CD4-positive, alpha-beta T cell (primary cell): ENCODE measurements at regions of chr20 and their contacts with region 1.

Region 1: DNA sequence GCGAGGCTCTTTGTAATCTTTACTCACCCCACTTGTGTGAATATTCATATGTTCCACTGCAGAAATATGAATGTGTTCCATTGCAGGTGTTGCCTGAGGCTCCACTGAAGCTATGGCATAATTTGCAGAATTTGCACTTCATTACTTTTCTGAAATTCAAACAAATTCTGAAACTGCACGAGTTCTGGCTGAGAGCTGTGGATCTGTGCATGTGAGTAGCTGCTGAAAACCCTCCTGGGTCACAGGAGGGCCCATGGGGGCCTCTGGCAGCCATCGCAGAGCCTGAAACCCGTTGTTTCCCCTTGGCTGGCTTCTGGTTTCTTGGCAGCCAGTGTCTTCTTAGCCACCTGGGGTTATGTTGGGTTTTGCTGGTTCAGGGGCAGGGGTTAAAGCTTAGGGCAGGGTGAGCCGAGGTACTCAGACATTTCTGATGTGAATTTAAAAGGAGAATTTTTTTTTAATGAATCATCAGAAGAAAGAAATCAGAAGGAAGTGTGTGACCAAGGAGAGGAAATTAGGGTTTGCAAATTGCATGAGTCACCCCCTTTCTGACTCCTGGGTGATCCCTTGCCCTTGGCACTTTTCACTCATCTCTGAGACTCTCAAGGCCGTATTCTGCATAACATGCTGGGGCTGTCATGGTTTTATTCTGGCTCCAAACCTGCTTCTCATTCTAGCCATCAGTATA is 40.6 kb downstream of the TOX2 start:
- DNase-seq: peak in 12 of 14 experiments; percentile 19 to 75 (median 45)
- ATAC-seq: peak; percentile 62
- H3K4me3 ChIP-seq: no peak overlapping the region
- H3K4me3 Mint-ChIP-seq: peak overlapping the region; percentile 44
- H3K27ac ChIP-seq: no peak overlapping the region
- H3K27ac Mint-ChIP-seq: peak overlapping the region; percentile 29
- H3K4me1 ChIP-seq: peaks cover 85% of the 10 kb centered on the region
- H3K4me1 Mint-ChIP-seq: peaks cover 88% of the 10 kb centered on the region
- H3K27me3 ChIP-seq: no peaks in the 10 kb centered on the region
- H3K27me3 Mint-ChIP-seq: peaks cover 6% of the 10 kb centered on the region
- CTCF ChIP-seq: no peak

Region 2: DNA sequence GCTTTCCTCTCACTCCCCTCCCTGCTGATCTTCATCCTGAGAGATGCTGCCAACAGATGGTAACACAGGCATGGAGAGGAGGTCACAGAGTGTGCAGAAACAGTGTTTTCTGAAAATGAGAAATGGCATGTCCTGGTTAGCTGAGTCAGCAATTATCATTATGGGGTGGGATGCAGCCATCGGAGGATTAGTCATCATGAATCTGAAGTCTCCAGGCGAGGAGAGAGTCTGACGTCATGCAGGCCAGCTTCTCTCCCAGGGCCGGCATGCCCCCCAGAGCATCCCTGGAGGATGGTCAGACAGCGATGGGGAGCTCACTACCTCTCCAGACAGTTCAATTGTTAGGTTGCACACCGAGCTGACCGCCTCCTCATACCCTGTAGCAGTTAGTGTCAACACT is 223.7 kb before region 1 on chr20:
- CTCF ChIA-PET with region 1: no interaction called
- POLR2A ChIA-PET with region 1: no interaction called
- intact Hi-C with region 1: no loop called
- DNase-seq: no peak
- ATAC-seq: no peak
- H3K4me3 ChIP-seq: no peak overlapping the region
- H3K4me3 Mint-ChIP-seq: no peak overlapping the region
- H3K27ac ChIP-seq: no peak overlapping the region
- H3K27ac Mint-ChIP-seq: no peak overlapping the region
- H3K4me1 ChIP-seq: peaks cover 19% of the 10 kb centered on the region
- H3K4me1 Mint-ChIP-seq: peaks cover 53% of the 10 kb centered on the region
- H3K27me3 ChIP-seq: no peaks in the 10 kb centered on the region
- H3K27me3 Mint-ChIP-seq: no peaks in the 10 kb centered on the region
- CTCF ChIP-seq: no peak

Region 3: GRCh38 chr20:43840382-43841070 is 114.7 kb before region 1 on chr20:
- CTCF ChIA-PET with region 1: no interaction called
- POLR2A ChIA-PET with region 1: no interaction called
- intact Hi-C with region 1: loop called in 1 of 2 experiments (anchors 10 kb)
- DNase-seq: peak in 11 of 14 experiments; percentile 7 to 57 (median 23)
- ATAC-seq: peak; percentile 64
- H3K4me3 ChIP-seq: no peak overlapping the region
- H3K4me3 Mint-ChIP-seq: no peak overlapping the region
- H3K27ac ChIP-seq: no peak overlapping the region
- H3K27ac Mint-ChIP-seq: no peak overlapping the region
- H3K4me1 ChIP-seq: peaks cover 17% of the 10 kb centered on the region
- H3K4me1 Mint-ChIP-seq: peaks cover 13% of the 10 kb centered on the region
- H3K27me3 ChIP-seq: no peaks in the 10 kb centered on the region
- H3K27me3 Mint-ChIP-seq: no peaks in the 10 kb centered on the region
- CTCF ChIP-seq: no peak

Region 4: DNA sequence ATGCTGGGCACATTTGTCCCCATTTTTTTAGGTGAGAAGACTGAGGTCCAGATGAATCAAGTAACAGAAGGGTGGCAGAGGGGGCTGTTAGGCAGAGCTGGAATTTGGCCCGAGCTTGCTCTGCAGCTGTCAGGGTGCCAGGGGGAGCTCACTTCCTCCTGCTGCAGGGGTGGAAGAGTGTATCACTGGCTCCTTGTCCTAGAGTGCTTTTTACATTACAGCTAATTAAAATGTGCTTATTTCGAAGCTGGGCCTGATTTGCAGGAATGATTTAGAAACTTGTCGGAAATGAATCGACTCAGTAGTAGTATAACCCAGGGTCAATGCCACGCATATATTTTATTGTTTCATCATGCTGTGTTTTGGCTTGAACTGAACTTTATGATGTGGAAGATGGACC is 29.4 kb before region 1 on chr20:
- CTCF ChIA-PET with region 1: interaction called, 3 read pairs
- POLR2A ChIA-PET with region 1: interaction called, 4 read pairs
- intact Hi-C with region 1: loop called in 1 of 2 experiments (anchors 2 kb)
- DNase-seq: peak in 8 of 14 experiments; percentile 9 to 56 (median 30)
- ATAC-seq: peak; percentile 75
- H3K4me3 ChIP-seq: no peak overlapping the region
- H3K4me3 Mint-ChIP-seq: peak overlapping the region; percentile 66
- H3K27ac ChIP-seq: no peak overlapping the region
- H3K27ac Mint-ChIP-seq: peak overlapping the region; percentile 43
- H3K4me1 ChIP-seq: peaks cover 49% of the 10 kb centered on the region
- H3K4me1 Mint-ChIP-seq: peaks cover 73% of the 10 kb centered on the region
- H3K27me3 ChIP-seq: peaks cover 0 to 3% of the 10 kb centered on the region in 2 experiments
- H3K27me3 Mint-ChIP-seq: peaks cover 5% of the 10 kb centered on the region
- CTCF ChIP-seq: no peak

Region 5: DNA sequence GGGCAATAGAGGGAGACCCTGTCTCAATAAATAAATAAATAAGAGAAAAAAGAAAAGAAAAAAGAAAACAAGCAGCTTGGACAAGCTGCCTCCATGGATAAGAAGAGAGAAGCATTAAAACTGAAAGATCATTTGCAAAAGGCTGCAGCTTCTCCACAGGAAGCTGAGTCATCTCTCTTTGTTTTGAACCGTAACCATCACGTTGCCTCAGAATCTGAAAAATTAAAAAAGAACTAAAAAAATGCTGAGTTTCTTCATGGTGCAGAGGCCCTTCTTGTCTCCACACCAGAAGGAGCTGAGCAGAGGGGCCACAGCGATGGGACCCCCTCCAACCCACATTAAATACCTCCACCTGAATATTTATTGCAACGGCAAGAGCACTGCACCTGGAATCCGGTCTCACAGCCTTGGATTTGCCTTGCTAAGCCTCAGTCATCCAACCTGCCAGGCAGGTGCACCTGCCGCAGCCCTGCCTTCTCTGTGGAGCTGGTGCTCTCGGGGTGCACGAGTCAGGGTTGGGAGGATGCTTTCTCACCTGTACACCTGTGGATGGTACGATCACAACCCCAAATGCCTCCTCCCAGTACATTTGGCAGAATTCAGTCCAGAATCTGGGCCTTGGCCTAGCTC is 12.4 kb before region 1 on chr20:
- CTCF ChIA-PET with region 1: interaction called, 4 read pairs
- POLR2A ChIA-PET with region 1: interaction called, 15 read pairs
- intact Hi-C with region 1: loop called in 1 of 2 experiments (anchors 2 kb)
- DNase-seq: peak in 5 of 14 experiments; percentile 20 to 66 (median 56)
- ATAC-seq: peak; percentile 71
- H3K4me3 ChIP-seq: no peak overlapping the region
- H3K4me3 Mint-ChIP-seq: peak overlapping the region; percentile 53
- H3K27ac ChIP-seq: peak overlapping the region in 1 of 2 donors; percentile 30
- H3K27ac Mint-ChIP-seq: peak overlapping the region; percentile 85
- H3K4me1 ChIP-seq: peaks cover 80% of the 10 kb centered on the region
- H3K4me1 Mint-ChIP-seq: peaks cover 86% of the 10 kb centered on the region
- H3K27me3 ChIP-seq: no peaks in the 10 kb centered on the region
- H3K27me3 Mint-ChIP-seq: no peaks in the 10 kb centered on the region
- CTCF ChIP-seq: no peak

Region 6: DNA sequence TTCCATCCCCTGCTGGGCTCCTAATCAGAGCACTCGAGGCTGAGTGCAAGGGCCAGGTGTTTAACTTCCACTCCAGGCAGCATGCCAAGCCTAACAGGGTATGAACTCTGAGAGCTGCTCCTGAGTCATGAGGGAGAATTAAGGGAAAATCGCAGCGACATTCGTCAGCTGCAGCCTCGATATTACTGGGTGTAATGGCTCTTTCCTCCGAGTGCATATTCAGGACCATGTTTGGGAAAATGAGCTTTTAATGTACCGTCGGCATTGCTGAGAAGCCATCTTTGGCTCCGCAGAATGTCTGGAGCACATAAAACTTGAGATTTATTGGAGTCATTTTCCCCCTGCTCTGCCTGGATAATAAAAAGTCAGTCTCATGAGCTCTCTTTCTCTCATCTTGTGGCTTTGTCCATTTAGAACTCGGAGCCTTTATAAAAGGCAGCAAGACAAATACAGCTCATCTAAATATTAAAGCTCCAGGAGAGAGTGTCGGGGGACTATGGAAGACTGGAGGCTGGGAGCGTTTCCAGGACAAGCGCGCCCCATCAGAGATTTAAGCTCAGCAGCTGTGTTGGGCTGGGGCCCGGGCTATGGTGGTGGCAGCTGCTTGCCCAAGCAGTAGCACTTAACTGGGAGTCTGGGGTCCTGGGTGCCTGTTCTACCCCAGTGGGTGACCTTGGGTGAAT is 63.2 kb after region 1 on chr20:
- CTCF ChIA-PET with region 1: no interaction called
- POLR2A ChIA-PET with region 1: interaction called, 6 read pairs
- intact Hi-C with region 1: loop called in 1 of 2 experiments (anchors 5 kb)
- DNase-seq: no peak
- ATAC-seq: no peak
- H3K4me3 ChIP-seq: no peak overlapping the region
- H3K4me3 Mint-ChIP-seq: no peak overlapping the region
- H3K27ac ChIP-seq: no peak overlapping the region
- H3K27ac Mint-ChIP-seq: no peak overlapping the region
- H3K4me1 ChIP-seq: peaks cover 32% of the 10 kb centered on the region
- H3K4me1 Mint-ChIP-seq: peaks cover 62% of the 10 kb centered on the region
- H3K27me3 ChIP-seq: peaks cover 0 to 3% of the 10 kb centered on the region in 2 experiments
- H3K27me3 Mint-ChIP-seq: no peaks in the 10 kb centered on the region
- CTCF ChIP-seq: no peak